Heart right ventricle (tissue), 16 donors: ENCODE measurements at regions of chr12 and their contacts with region 1.

Region 1: DNA sequence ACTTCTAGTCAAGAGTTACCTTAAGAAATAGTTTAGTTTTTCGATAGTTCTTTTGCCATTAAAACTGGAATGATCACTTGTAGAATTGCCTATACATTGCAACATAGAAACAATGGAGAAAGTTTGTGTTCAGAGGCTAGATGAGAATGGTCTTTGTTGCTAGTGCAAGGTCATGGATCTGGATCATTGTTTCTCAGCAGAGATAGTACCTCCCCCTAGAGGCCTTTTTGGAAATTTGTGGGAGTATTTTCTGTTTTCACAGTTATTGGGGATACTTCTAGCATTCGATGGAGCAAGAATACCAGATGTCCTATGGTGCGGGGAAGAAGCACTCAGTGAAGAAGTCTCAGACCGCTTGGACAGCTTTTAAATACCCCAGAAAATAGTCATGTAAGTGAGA is 138.8 kb upstream of the HMGA2 start:
- DNase-seq: no peak
- ATAC-seq: no peak
- H3K4me3 ChIP-seq: no peak overlapping the region
- H3K27ac ChIP-seq: no peak overlapping the region
- H3K4me1 ChIP-seq: no peaks in the 10 kb centered on the region
- H3K27me3 ChIP-seq: no peaks in the 10 kb centered on the region
- CTCF ChIP-seq: peak in 8 of 9 donors; percentile 19 to 61 (median 48)

Region 2: DNA sequence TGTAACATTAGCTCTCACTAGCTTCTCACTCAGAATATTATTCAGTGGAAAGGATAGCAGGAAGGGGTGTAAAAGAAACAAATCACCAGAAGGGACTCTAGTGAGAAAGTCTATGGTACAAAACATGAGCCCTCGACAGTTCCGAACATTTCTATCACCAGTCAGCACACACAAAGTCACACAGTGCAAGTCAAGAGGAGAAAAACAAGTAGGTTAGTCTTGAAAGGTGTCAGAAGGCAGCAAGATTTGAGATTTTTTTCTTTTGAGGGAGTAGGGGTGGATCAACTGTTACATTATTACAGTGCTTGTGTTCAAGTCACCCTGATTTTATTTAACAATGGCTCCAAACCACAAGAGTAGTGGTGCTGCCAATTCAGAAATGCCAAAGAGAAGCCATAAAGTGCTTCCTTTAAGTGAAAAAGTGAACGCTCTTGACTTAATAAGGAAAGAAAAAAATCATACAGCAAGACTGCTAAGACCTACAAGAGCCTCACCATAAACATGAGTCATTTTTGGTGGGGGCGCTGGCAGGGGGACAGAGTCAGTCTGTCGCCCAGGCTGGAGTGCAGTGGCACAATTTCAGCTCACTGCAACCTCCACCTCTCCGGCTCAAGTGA is 968.6 kb before region 1 on chr12:
- intact Hi-C with region 1: no loop called
- DNase-seq: no peak
- ATAC-seq: no peak
- H3K4me3 ChIP-seq: no peak overlapping the region
- H3K27ac ChIP-seq: no peak overlapping the region
- H3K4me1 ChIP-seq: peaks cover 0 to 34% (median 0%) of the 10 kb centered on the region in 9 donors
- H3K27me3 ChIP-seq: no peaks in the 10 kb centered on the region
- CTCF ChIP-seq: no peak

Region 3: DNA sequence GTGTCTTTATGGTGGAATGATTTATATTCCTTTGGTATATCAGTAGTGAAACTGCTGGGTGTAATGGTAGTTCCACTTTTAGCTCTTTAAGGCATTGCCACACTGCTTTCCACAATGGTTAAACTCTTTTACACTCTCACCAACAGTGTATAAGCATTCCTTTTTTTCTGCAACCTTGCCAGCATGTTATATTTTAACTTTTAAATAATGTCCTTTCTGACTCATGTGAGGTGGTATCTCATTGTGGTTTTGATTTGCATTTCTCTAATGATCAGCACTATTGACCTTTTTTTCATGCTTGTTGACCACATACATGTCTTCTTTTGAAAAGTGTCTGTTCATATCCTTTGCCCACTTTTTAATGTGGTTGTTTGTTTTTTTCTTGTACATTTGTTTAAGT is 264.6 kb before region 1 on chr12:
- intact Hi-C with region 1: no loop called
- DNase-seq: no peak
- ATAC-seq: no peak
- H3K4me3 ChIP-seq: no peak overlapping the region
- H3K27ac ChIP-seq: no peak overlapping the region
- H3K4me1 ChIP-seq: no peaks in the 10 kb centered on the region
- H3K27me3 ChIP-seq: no peaks in the 10 kb centered on the region
- CTCF ChIP-seq: no peak

Region 4: GRCh38 chr12:65565601-65566560 is 119.6 kb before region 1 on chr12:
- intact Hi-C with region 1: loop called in 3 of 10 experiments (anchors 10 kb)
- DNase-seq: no peak
- ATAC-seq: peak in 6 of 8 donors; percentile 25 to 64 (median 45)
- H3K4me3 ChIP-seq: no peak overlapping the region
- H3K27ac ChIP-seq: peak overlapping the region in 5 of 10 donors; percentile 7 to 59 (median 42)
- H3K4me1 ChIP-seq: peaks cover 0 to 36% (median 20%) of the 10 kb centered on the region in 9 donors
- H3K27me3 ChIP-seq: peaks cover 0 to 3% (median 0%) of the 10 kb centered on the region in 7 donors
- CTCF ChIP-seq: no peak

Region 5: GRCh38 chr12:65602610-65603295 is 82.8 kb before region 1 on chr12:
- intact Hi-C with region 1: loop called in 2 of 10 experiments (anchors 5 to 10 kb)
- DNase-seq: peak; percentile 53 to 81
- ATAC-seq: peak; percentile 94 to 99 (median 96)
- H3K4me3 ChIP-seq: peak overlapping the region in 7 of 10 donors; percentile 2 to 46 (median 26)
- H3K27ac ChIP-seq: peak overlapping the region in 8 of 10 donors; percentile 17 to 70 (median 54)
- H3K4me1 ChIP-seq: peaks cover 0 to 32% (median 15%) of the 10 kb centered on the region in 9 donors
- H3K27me3 ChIP-seq: peaks cover 0 to 33% (median 0%) of the 10 kb centered on the region in 7 donors
- CTCF ChIP-seq: peak; percentile 53 to 85 (median 69)